HepG2 (cell line): ENCODE measurements at regions of chr21 and their contacts with region 1.

Region 1: DNA sequence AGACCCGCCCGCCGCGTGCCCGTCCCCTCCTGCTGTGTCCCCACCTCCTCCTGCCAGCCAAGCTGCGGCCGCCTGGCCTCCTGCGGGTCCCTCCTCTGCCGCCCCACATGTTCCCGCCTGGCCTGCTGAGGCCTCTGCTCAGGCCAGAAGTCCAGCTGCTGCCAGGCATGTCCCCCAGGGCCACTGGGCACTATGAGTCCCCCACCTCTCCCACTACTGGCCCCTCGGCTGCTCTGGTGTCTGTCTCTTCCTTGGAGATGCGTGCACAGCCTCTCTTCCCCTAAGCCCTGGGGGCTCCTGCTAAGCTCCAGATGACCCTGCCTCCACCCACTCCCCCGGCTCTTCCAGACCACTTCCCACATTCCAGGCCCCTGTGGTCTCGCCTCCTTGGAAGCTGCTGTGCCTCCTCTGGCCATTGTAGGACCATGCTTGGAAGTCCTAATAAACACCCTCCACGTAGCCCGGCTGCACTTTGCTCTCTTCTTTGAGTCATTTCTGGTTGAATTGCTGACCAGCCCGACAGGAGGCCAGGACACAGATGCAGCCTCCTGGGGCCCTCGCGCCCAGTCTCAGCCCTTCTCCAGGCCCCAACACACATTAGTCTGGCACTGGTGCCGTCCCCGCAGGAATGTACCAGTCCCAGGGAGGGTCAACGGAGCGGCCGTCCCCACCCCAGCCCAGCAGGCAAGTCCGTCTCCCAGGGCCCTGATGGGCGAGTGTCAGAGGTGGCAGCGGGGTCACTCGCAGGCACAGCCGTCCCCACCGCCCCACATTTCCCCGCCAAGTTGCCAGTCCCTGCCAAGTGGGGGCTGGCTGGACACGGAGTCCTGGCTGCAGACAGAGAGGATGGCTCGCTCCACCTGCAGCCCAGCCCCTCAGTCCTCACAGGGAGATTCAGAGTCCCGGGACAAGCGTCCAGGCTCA is 1.1 kb downstream of the KRTAP10-12 start:
- DNase-seq: peak; percentile 69
- ATAC-seq: peak; percentile 77
- H3K4me3 ChIP-seq: peak overlapping the region; percentile 40 to 68 (median 44); a peak in 5 of 6 replicates
- H3K27ac ChIP-seq: peak overlapping the region; percentile 35
- H3K4me1 ChIP-seq: peaks cover 80% of the 10 kb centered on the region
- H3K27me3 ChIP-seq: peaks cover 0 to 3% of the 10 kb centered on the region in 2 experiments; a peak in 1 of 5 replicates
- CTCF ChIP-seq: peak; percentile 15; the same call in 1 of the 2 replicates
- EP300 ChIP-seq: no peak
- POLR2A ChIP-seq: no peak
- RAD21 ChIP-seq: 0 out of 2 replicates have a peak, but pooled peaks have one; percentile 10

Region 2: GRCh38 chr21:44637018-44637850 is 60.8 kb before region 1 on chr21 and contains the start of gene KRTAP10-10:
- CTCF ChIA-PET with region 1: no interaction called
- POLR2A ChIA-PET with region 1: no interaction called
- in situ Hi-C with region 1: no loop called
- intact Hi-C with region 1: loop called (anchors 10 kb)
- DNase-seq: no peak
- ATAC-seq: peak; percentile 31; the same call in 2 of the 3 replicates
- H3K4me3 ChIP-seq: no peak within 1 kb of the TSS
- H3K27ac ChIP-seq: no peak within 1 kb of the TSS
- H3K4me1 ChIP-seq: no peaks in the 10 kb centered on the region
- H3K27me3 ChIP-seq: peaks cover 1 to 6% of the 10 kb centered on the region in 2 experiments; a peak in 2 of 5 replicates
- CTCF ChIP-seq: no peak
- EP300 ChIP-seq: no peak
- POLR2A ChIP-seq: no peak
- RAD21 ChIP-seq: no peak
- total RNA-seq, gene KRTAP10-10: not detected in 2 replicates

Region 3: DNA sequence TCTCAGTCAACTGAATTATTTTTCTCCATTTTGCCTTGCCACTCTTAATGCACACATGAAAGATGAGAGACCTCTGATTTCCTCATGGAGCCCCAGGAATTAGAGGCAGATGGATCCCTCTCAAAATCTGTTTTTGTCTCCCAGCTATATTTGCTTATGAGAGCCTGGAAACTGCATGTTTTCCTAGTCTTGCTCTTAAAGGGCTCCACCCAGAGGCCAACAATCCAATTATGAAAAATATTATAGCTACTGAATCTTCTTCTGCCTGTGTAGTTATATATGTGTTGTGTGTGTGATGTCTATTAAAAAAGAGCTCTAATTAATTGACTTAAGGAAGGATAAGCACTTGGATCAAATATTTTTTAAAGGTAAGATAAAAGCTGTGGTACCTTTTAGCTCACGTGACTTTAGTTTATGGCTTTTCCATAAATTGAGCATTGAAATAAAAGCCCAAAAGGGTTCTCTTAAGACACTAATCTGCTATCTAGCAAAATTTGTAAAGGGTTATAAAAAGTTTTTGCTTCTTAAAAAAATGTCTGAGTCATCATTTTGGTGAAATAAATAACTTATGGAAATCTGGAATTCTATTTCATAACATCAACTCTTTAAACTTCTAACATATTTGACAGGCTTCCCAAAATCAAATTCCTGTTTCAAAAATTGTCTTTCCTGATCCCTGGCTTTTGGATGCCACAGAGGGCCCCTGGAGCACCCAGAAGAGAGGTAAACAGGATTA is 44.5 kb after region 1 on chr21:
- CTCF ChIA-PET with region 1: no interaction called
- POLR2A ChIA-PET with region 1: no interaction called
- in situ Hi-C with region 1: no loop called
- intact Hi-C with region 1: loop called (anchors 5 kb)
- DNase-seq: peak; percentile 30
- ATAC-seq: no peak
- H3K4me3 ChIP-seq: no peak overlapping the region
- H3K27ac ChIP-seq: no peak overlapping the region
- H3K4me1 ChIP-seq: no peaks in the 10 kb centered on the region
- H3K27me3 ChIP-seq: peaks cover 3 to 12% of the 10 kb centered on the region in 2 experiments; a peak in 4 of 5 replicates
- CTCF ChIP-seq: peak; percentile 60
- EP300 ChIP-seq: no peak
- POLR2A ChIP-seq: no peak
- RAD21 ChIP-seq: peak; percentile 17; the same call in 1 of the 2 replicates